Ovary (tissue), 10 donors: ENCODE measurements at regions of chr2 and their contacts with region 1.

Region 1: GRCh38 chr2:222613715-222614331 is 42.1 kb downstream of the FARSB start:
- DNase-seq: no peak
- H3K4me3 ChIP-seq: no peak overlapping the region
- H3K27ac ChIP-seq: no peak overlapping the region
- H3K4me1 ChIP-seq: no peaks in the 10 kb centered on the region
- H3K27me3 ChIP-seq: no peaks in the 10 kb centered on the region
- CTCF ChIP-seq: peak; percentile 27 to 59 (median 49)
- EP300 ChIP-seq: no peak
- POLR2A ChIP-seq: no peak

Region 2: DNA sequence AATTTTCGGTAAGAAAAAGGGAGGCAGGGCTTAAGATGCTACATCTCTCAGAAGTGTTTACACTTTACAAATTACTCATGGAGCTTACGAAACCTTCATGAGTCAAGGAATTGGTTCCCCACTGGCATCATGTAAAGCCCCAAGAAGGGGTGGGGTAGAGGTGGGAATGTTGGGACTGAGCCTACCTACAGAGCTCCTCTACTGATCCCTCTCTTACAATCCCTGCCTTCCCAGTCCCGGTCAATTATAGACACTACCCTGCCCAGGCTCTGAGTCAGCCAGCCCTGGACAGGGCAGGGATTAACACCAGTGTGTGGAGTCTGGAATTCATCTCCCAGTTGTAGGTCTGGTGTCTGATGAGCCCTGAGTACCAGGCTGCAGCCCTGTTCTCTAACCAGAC is 563.9 kb before region 1 on chr2:
- intact Hi-C with region 1: loop called in 2 of 4 experiments (anchors 5 to 10 kb)
- DNase-seq: no peak
- H3K4me3 ChIP-seq: no peak overlapping the region
- H3K27ac ChIP-seq: no peak overlapping the region
- H3K4me1 ChIP-seq: no peaks in the 10 kb centered on the region
- H3K27me3 ChIP-seq: no peaks in the 10 kb centered on the region
- CTCF ChIP-seq: no peak
- EP300 ChIP-seq: no peak
- POLR2A ChIP-seq: no peak

Region 3: DNA sequence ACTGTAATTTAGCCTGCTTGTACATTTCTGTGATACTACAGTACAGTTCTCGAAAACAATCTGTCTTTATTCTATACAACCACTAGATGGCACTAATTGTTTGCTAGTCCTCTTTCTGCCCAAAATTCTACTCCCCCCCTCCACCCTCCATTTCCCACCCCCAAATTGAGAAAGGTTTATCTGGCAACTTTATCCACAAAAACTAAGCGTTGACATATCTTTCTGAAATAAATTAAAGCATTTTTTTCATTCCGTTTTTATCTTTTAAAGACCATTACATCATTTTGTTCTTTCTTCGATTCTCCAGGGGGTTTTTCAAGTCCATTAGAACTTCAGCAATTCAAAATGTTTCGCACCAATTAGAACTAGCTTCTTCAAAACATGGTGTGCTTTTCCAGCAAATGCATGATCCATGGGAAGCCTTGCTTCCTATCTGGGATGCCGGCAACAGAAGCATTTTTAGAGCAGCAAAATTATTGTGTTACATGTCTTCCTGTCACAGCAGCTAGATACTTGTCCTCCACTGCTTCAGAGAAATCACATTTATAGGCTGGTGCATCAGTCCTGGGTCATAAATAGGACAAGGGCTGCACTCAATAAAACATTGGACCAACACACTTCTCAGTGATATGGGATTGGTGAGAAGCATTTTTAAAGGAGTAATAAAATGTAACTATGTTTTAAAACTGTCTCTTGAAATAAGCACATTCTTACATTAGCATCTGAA is 556.3 kb before region 1 on chr2:
- intact Hi-C with region 1: loop called in 1 of 4 experiments (anchors 10 kb)
- DNase-seq: no peak
- H3K4me3 ChIP-seq: no peak overlapping the region
- H3K27ac ChIP-seq: no peak overlapping the region
- H3K4me1 ChIP-seq: no peaks in the 10 kb centered on the region
- H3K27me3 ChIP-seq: no peaks in the 10 kb centered on the region
- CTCF ChIP-seq: no peak
- EP300 ChIP-seq: no peak
- POLR2A ChIP-seq: no peak

Region 4: GRCh38 chr2:222318026-222318711 is 295.7 kb before region 1 on chr2:
- intact Hi-C with region 1: loop called in 2 of 4 experiments (anchors 5 to 10 kb)
- DNase-seq: peak in 3 of 5 donors; percentile 33 to 61 (median 42)
- H3K4me3 ChIP-seq: peak overlapping the region; percentile 34
- H3K27ac ChIP-seq: no peak overlapping the region
- H3K4me1 ChIP-seq: peaks cover 3% of the 10 kb centered on the region
- H3K27me3 ChIP-seq: no peaks in the 10 kb centered on the region
- CTCF ChIP-seq: peak in 1 of 3 donors; percentile 25
- EP300 ChIP-seq: no peak
- POLR2A ChIP-seq: no peak

Region 5: DNA sequence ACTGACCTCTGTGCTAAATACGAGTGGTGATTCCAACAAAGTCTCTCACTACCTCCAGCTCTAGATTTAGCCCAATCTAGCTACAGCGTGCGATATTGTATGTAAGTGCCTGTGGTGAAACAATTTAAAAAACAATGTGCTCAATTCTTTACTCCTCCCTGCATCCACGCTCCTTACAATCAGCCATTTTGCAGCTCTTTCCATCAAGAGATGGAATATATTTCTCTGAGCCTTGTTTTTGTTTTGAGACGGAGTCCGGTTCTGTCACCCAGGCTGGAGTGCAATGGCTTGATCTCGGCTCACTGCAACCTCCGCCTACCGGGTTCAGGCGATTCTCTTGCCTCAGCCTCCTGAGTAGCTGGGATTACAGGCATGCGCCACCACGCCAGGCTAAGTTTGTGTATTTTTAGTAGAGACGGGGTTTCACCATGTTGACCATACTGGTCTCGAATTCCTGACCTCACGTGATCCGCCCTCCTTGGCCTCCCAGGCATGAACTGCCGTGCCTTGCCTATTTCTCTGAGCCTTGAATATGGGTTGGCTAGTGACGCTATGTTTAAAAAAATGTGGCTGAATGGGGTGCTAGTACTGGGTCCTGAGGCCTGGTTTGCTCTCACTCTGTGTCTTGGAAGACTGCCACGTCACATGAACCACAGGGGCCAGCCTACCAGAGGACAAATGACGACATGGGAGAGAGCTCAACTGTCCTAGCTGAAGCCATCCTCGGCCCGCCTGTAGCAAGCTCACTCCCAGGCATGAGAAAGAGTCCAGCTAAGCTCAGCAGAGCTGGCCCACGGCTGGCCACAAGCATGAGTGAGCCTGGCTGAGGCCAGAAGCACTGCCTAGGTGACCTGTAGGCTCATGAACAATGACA is 1316.5 kb after region 1 on chr2:
- intact Hi-C with region 1: no loop called
- DNase-seq: no peak
- H3K4me3 ChIP-seq: no peak overlapping the region
- H3K27ac ChIP-seq: no peak overlapping the region
- H3K4me1 ChIP-seq: peaks cover 10% of the 10 kb centered on the region
- H3K27me3 ChIP-seq: no peaks in the 10 kb centered on the region
- CTCF ChIP-seq: no peak
- EP300 ChIP-seq: no peak
- POLR2A ChIP-seq: no peak